ENCODE measurements at regions of chr3 and their contacts with region 1.

Region 1: DNA sequence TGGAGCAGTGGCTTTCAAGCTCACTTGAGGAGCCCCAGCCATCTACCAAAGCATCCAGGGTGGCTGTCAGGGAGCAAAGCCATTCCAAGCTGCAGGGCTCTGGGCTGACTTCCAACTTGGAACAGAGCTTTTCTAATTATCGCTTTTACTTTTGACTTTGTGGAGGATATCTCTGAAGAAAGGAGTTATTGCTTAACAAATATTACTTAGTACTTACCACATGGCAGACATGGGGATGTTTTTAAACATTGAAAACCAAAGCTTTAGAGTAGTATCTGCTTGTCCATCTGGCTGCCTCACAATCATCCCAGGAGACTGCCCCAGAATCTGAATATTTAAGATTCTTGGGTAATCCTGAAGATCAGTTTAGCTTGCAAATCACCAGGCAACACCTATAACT is 8.9 kb downstream of the TAGLN3 start:
- DNase-seq: no peak
- H3K4me3 Mint-ChIP-seq: no peak overlapping the region
- H3K27ac Mint-ChIP-seq: no peak overlapping the region
- H3K4me1 Mint-ChIP-seq: peaks cover 29% of the 10 kb centered on the region
- H3K27me3 Mint-ChIP-seq: no peaks in the 10 kb centered on the region

Region 2: GRCh38 chr3:111989061-111989678 is 18.5 kb before region 1 on chr3:
- CTCF ChIA-PET with region 1: interaction called, 454 read pairs
- intact Hi-C with region 1: loop called (anchors 1 kb)
- DNase-seq: no peak
- H3K4me3 Mint-ChIP-seq: no peak overlapping the region
- H3K27ac Mint-ChIP-seq: no peak overlapping the region
- H3K4me1 Mint-ChIP-seq: peaks cover 27% of the 10 kb centered on the region
- H3K27me3 Mint-ChIP-seq: no peaks in the 10 kb centered on the region

Measured in activated naive CD4-positive, alpha-beta T cell treated with anti-CD3 and anti-CD28 coated beads for 36 hours (primary cell).